ENCODE measurements at regions of chr1 and their contacts with region 1.

Region 1: GRCh38 chr1:109426278-109427170 is at the start of gene PSMA5:
- DNase-seq: peak; percentile 100
- H3K4me3 ChIP-seq: peak within 1 kb of the TSS; percentile 77 to 98 (median 94)
- H3K27ac ChIP-seq: peak within 1 kb of the TSS; percentile 77
- H3K4me1 ChIP-seq: peaks cover 8% of the 10 kb centered on the region
- H3K27me3 ChIP-seq: no peaks in the 10 kb centered on the region
- CTCF ChIP-seq: no peak
- total RNA-seq, gene PSMA5: 46.0 to 110 TPM

Region 2: GRCh38 chr1:109397538-109398342 is 28.8 kb before region 1 on chr1 and contains the start of gene SORT1:
- CTCF ChIA-PET with region 1: interaction called, 22 read pairs
- dilution Hi-C with region 1: no loop called
- in situ Hi-C with region 1: no loop called
- intact Hi-C with region 1: no loop called
- DNase-seq: peak; percentile 77
- H3K4me3 ChIP-seq: peak within 1 kb of the TSS; percentile 54 to 73 (median 65)
- H3K27ac ChIP-seq: peak within 1 kb of the TSS; percentile 16
- H3K4me1 ChIP-seq: peaks cover 20% of the 10 kb centered on the region
- H3K27me3 ChIP-seq: no peaks in the 10 kb centered on the region
- CTCF ChIP-seq: no peak
- total RNA-seq, gene SORT1: 24.6 to 41.8 TPM

Region 3: DNA sequence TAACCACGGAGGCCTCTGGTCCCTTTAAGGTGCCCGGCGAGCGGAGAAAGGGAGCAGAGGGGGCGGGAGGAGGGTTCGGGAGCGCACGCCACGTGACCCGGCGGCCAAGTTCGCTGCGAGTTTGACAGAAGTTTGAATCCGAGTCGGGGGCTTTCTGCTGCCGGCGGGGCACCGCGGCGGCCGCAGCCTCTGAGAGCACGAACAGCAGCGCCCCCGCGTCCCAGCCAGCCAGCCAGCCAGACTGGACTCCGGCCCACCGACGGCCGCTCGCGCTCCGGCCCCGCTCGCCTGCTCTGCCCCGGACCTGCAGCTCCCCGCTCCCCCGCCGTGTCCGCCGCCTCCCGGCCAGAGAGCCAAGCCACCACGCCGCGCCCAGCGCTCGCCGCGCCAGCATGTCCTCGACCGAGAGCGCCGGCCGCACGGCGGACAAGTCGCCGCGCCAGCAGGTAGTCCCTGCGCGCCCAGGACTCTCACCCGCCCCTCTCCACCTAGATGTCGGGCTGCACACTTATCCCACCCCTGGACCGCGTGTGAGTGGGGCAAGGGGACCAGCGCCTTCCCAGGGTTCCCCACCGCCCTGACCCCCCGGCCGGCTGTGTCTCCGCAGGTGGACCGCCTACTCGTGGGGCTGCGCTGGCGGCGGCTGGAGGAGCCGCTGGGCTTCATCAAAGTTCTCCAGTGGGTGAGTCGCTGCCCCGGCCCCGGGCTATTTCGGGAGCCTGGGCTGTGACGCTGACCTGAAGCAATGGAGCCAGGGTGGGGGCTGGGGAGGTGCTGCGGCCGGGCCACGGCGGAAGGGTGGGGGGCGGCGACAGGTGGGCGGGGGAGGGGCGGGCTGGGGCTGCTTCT is 40.2 kb after region 1 on chr1 and contains the start of gene SYPL2:
- CTCF ChIA-PET with region 1: no interaction called
- dilution Hi-C with region 1: no loop called
- in situ Hi-C with region 1: no loop called
- intact Hi-C with region 1: loop called (anchors 5 kb)
- DNase-seq: no peak
- H3K4me3 ChIP-seq: peak within 1 kb of the TSS in 2 of 3 experiments; percentile 39 to 44
- H3K27ac ChIP-seq: no peak within 1 kb of the TSS
- H3K4me1 ChIP-seq: peaks cover 9% of the 10 kb centered on the region
- H3K27me3 ChIP-seq: peaks cover 45% of the 10 kb centered on the region
- CTCF ChIP-seq: no peak
- total RNA-seq, gene SYPL2: not detected

Region 4: DNA sequence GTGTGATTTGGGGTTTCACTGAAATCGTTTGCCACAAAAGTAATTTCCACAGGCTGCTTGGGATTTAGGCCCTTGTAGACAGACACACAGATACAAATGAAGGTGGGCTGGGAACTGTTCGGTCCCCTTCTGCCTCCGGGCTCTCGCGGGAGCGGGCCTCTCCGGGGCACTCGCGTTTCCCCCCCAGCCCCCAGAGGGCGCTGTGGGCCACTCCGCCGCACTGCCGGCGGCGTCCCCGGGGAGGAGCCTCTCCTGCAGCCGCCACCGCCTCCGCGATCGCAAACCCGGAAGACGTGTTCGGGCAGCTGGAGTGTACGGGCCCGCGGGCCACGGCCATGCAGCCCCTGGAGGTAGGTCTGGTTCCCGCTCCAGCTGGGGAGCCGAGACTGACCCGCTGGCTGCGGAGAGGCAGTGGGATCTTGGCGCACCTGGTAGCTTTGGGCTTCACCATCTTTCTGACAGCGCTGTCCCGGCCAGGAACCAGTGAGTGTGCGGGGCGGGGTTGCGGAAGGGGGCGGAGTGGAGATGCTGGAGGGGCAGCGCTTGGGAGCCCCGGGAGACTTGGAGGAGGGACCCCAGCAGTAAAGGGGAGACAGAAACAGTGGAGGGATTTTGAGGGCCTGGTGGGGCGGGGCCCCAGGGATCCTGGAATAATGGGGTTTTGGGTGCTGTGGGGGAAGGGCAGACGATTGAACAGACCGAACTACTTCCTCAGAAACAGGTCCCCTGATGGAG is 67.4 kb after region 1 on chr1 and contains the start of gene CYB561D1:
- CTCF ChIA-PET with region 1: no interaction called
- dilution Hi-C with region 1: no loop called
- in situ Hi-C with region 1: no loop called
- intact Hi-C with region 1: loop called (anchors 2 kb)
- DNase-seq: peak; percentile 80
- H3K4me3 ChIP-seq: peak within 1 kb of the TSS; percentile 93 to 98 (median 94)
- H3K27ac ChIP-seq: no peak within 1 kb of the TSS
- H3K4me1 ChIP-seq: peaks cover 4% of the 10 kb centered on the region
- H3K27me3 ChIP-seq: no peaks in the 10 kb centered on the region
- CTCF ChIP-seq: peak; percentile 58 to 95
- total RNA-seq, gene CYB561D1: 7.3 to 7.7 TPM

Region 5: GRCh38 chr1:110003747-110004630 is 577.5 kb after region 1 on chr1:
- CTCF ChIA-PET with region 1: no interaction called
- dilution Hi-C with region 1: no loop called
- in situ Hi-C with region 1: no loop called
- intact Hi-C with region 1: no loop called
- DNase-seq: peak; percentile 99
- H3K4me3 ChIP-seq: peak overlapping the region; percentile 12 to 27 (median 17)
- H3K27ac ChIP-seq: peak overlapping the region; percentile 78
- H3K4me1 ChIP-seq: peaks cover 37% of the 10 kb centered on the region
- H3K27me3 ChIP-seq: no peaks in the 10 kb centered on the region
- CTCF ChIP-seq: no peak

Measured in mammary epithelial cell (primary cell).